H1 (cell line): ENCODE measurements at regions of chr17 and their contacts with region 1.

Region 1: DNA sequence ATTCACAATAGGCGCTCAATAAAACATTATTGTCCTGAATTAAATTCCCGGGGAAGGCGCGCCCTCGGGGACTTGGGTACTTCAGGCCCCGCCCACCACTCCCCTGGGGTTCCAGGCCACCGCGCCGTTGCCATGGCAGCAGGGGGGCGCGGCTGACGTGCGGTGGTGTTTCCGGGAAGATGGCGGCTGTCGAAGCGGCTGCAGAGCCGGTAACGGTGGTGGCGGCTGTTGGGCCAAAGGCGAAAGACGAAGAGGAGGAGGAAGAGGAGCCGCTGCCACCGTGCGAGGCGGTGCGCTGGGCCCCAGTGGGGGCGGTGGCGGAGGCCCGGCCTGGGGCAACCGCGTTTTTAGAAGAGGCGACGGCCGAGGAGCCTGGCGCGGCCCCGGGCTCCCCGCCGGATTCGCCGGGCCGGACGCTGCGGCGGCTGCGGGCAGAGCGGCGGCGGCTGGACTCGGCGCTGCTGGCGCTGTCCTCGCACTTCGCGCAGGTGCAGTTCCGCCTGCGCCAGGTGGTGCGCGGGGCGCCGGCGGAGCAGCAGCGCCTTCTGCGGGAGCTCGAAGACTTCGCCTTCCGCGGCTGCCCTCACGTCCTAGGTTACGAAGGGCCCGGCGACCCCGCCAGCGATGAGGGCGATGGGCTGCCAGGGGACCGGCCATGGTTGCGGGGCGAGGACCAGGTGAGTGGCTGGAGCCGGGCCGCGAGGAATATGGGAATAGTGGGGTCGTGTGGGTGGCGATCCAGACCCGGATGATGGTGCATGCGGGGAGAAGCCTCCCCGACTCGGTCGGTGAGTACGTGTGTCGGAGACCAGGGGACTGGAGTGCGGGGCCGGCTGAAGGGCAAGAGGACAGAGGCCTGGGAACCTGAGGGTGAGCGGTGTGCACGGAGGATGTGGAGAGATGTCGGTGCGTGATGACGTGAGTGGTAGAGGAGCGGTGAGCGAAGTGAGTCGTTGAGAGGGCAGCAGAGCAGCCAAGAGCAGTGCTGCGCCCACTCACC is at the start of gene RUNDC1:
- DNase-seq: peak in 1 of 2 experiments; percentile 97
- H3K4me3 ChIP-seq: peak within 1 kb of the TSS; percentile 72 to 96 (median 89)
- H3K27ac ChIP-seq: peak within 1 kb of the TSS; percentile 57; the same call in 1 of the 2 replicates
- H3K4me1 ChIP-seq: peaks cover 3 to 16% (median 4%) of the 10 kb centered on the region in 4 experiments; a peak in 5 of 7 replicates
- H3K27me3 ChIP-seq: no peaks in the 10 kb centered on the region
- CTCF ChIP-seq: peak; percentile 4 to 34 (median 20); a peak in 3 of 4 replicates
- EP300 ChIP-seq: no peak
- POLR2A ChIP-seq: peak in 1 of 2 experiments; percentile 12; a peak in 2 of 3 replicates
- RAD21 ChIP-seq: peak in 1 of 2 experiments; percentile 40; a peak in 1 of 4 replicates
- total RNA-seq, gene RUNDC1: 10.7 and 11.9 TPM in 2 replicates

Region 2: GRCh38 chr17:42878123-42878880 is 102.4 kb before region 1 on chr17:
- CTCF ChIA-PET with region 1: no interaction called
- POLR2A ChIA-PET with region 1: no interaction called
- DNase-seq: peak; percentile 15 to 87
- H3K4me3 ChIP-seq: peak overlapping the region in 1 of 4 experiments; percentile 40; a peak in 3 of 8 replicates
- H3K27ac ChIP-seq: no peak overlapping the region
- H3K4me1 ChIP-seq: peaks cover 0 to 8% (median 5%) of the 10 kb centered on the region in 4 experiments; a peak in 4 of 7 replicates
- H3K27me3 ChIP-seq: peaks cover 0 to 5% (median 0%) of the 10 kb centered on the region in 4 experiments; a peak in 4 of 7 replicates
- CTCF ChIP-seq: peak; percentile 9 to 36 (median 22); a peak in 3 of 4 replicates
- EP300 ChIP-seq: no peak
- POLR2A ChIP-seq: no peak
- RAD21 ChIP-seq: peak in 1 of 2 experiments; percentile 28; a peak in 1 of 4 replicates

Region 3: GRCh38 chr17:42964161-42964932 is 16.4 kb before region 1 on chr17 and contains the start of gene AARSD1:
- CTCF ChIA-PET with region 1: interaction called, 4 read pairs
- POLR2A ChIA-PET with region 1: interaction called, 17 read pairs
- DNase-seq: peak; percentile 80 to 88
- H3K4me3 ChIP-seq: peak within 1 kb of the TSS; percentile 69 to 84 (median 74)
- H3K27ac ChIP-seq: peak within 1 kb of the TSS; percentile 46; the same call in 1 of the 2 replicates
- H3K4me1 ChIP-seq: peaks cover 0 to 2% (median 0%) of the 10 kb centered on the region in 4 experiments; a peak in 1 of 7 replicates
- H3K27me3 ChIP-seq: no peaks in the 10 kb centered on the region
- CTCF ChIP-seq: no peak
- EP300 ChIP-seq: no peak
- POLR2A ChIP-seq: peak in 1 of 2 experiments; percentile 88; a peak in 2 of 3 replicates
- RAD21 ChIP-seq: no peak
- total RNA-seq, gene AARSD1: 45.0 and 51.5 TPM in 2 replicates

Region 4: GRCh38 chr17:43010667-43011308 is 30.1 kb after region 1 on chr17:
- CTCF ChIA-PET with region 1: no interaction called
- POLR2A ChIA-PET with region 1: no interaction called
- DNase-seq: no peak
- H3K4me3 ChIP-seq: no peak overlapping the region
- H3K27ac ChIP-seq: no peak overlapping the region
- H3K4me1 ChIP-seq: peaks cover 3 to 7% (median 3%) of the 10 kb centered on the region in 4 experiments
- H3K27me3 ChIP-seq: no peaks in the 10 kb centered on the region
- CTCF ChIP-seq: no peak
- EP300 ChIP-seq: no peak
- POLR2A ChIP-seq: no peak
- RAD21 ChIP-seq: no peak